Activated CD4-positive, alpha-beta T cell treated with anti-CD3 and anti-CD28 coated beads for 36 hours (primary cell): ENCODE measurements at regions of chr2 and their contacts with region 1.

Region 1: GRCh38 chr2:213151437-213152064 is at the start of gene IKZF2:
- DNase-seq: peak; percentile 82
- ATAC-seq: peak; percentile 77
- H3K4me3 Mint-ChIP-seq: peak within 1 kb of the TSS; percentile 88
- H3K27ac Mint-ChIP-seq: peak within 1 kb of the TSS; percentile 85
- H3K4me1 Mint-ChIP-seq: peaks cover 35% of the 10 kb centered on the region
- H3K27me3 Mint-ChIP-seq: peaks cover 32% of the 10 kb centered on the region
- total RNA-seq, gene IKZF2: 6.3 to 8.3 TPM

Region 2: DNA sequence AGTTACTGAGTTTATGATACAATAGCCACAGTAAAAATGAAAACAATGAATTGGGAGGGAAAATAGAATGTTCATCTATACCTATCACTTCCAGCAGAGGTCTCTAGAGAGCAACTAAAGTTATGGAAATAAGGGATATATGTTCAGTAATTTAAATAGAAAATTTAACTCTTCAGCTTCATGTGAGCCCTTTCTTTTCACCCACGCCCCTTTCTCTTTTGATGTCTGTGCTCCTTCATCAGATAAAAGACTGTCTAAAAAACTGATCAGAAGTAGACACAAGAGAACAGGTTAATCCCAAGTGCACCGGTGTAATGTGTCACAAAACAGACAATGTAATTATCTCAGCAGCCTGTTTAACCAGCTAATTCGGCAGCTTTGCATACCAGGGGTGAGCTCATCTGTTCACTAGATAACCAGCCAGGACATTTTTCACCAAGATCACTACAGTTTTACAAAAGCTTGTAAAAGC is 374.5 kb before region 1 on chr2:
- CTCF ChIA-PET with region 1: interaction called, 20 read pairs
- POLR2A ChIA-PET with region 1: no interaction called
- intact Hi-C with region 1: loop called (anchors 1 kb)
- DNase-seq: no peak
- ATAC-seq: peak; percentile 44
- H3K4me3 Mint-ChIP-seq: no peak overlapping the region
- H3K27ac Mint-ChIP-seq: no peak overlapping the region
- H3K4me1 Mint-ChIP-seq: peaks cover 4% of the 10 kb centered on the region
- H3K27me3 Mint-ChIP-seq: no peaks in the 10 kb centered on the region

Region 3: DNA sequence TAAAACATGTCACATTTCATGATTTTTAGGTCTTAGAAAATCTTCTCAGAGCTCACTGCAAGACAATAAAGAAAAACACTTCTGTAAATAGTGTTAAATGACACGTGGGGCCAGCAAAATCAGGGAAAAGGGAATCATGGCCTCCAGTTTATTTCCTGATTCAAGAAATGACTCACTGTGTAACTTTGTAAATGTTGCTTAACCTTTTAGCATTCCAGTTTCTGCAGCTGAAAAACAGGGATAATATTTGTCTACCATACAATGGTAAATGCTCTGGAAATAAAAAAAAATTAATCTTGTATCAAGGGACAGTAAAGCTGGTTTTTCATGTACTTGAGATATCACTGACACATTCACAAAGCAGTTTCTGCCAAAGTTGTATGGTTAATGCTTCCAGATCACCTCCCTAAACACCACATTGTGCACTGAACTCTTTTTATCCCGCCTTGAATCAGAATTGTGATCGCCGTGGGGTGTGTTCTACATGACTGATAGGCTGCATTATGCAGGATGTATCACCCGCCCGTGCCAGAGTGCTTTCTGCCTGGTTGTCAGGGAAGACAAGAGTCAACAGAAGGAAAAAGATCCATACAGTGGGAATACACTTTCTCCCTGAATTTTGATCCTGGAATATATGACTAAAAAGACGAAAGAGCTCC is 239.0 kb before region 1 on chr2:
- CTCF ChIA-PET with region 1: interaction called, 3 read pairs
- POLR2A ChIA-PET with region 1: no interaction called
- intact Hi-C with region 1: loop called (anchors 2 to 5 kb)
- DNase-seq: no peak
- ATAC-seq: no peak
- H3K4me3 Mint-ChIP-seq: no peak overlapping the region
- H3K27ac Mint-ChIP-seq: no peak overlapping the region
- H3K4me1 Mint-ChIP-seq: peaks cover 26% of the 10 kb centered on the region
- H3K27me3 Mint-ChIP-seq: peaks cover 12% of the 10 kb centered on the region

Region 4: DNA sequence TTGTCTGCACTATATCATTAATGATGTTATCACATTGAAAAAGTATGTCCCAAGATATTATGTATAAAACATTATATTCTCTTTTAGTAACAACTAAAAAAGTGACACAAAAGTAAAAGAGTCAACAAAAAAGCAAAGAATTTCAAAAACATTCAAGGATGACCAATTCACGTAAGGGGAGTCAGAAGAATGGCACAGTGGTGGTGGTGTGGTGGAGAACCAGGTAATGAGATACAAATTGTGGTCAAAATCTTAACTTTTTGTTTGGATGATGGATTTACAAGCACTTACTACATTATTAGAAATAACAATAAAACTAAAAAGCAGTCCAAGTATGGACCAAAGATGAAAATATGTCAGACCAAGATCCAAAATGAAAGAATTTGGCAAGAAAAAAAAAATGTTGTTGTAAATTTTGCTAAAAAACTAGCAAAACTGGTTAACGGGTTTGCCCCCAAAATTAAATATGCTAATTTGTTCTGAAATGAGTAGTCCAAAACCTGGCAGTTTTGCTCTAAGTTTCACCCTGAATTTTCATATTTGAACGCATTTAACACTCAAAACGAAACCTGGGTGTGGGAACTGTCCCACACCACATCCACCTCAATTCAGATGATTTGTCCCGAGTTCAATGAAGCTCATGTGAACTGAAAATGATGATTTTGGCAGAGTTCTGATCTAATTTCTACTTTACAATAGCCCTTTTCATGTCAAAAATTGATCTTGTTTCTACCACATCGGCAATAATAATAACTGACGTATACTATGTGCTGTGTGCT is 136.0 kb before region 1 on chr2:
- CTCF ChIA-PET with region 1: interaction called, 4 read pairs
- POLR2A ChIA-PET with region 1: no interaction called
- intact Hi-C with region 1: loop called (anchors 1 to 2 kb)
- DNase-seq: peak; percentile 78
- ATAC-seq: peak; percentile 81
- H3K4me3 Mint-ChIP-seq: no peak overlapping the region
- H3K27ac Mint-ChIP-seq: no peak overlapping the region
- H3K4me1 Mint-ChIP-seq: peaks cover 36% of the 10 kb centered on the region
- H3K27me3 Mint-ChIP-seq: peaks cover 17% of the 10 kb centered on the region

Region 5: DNA sequence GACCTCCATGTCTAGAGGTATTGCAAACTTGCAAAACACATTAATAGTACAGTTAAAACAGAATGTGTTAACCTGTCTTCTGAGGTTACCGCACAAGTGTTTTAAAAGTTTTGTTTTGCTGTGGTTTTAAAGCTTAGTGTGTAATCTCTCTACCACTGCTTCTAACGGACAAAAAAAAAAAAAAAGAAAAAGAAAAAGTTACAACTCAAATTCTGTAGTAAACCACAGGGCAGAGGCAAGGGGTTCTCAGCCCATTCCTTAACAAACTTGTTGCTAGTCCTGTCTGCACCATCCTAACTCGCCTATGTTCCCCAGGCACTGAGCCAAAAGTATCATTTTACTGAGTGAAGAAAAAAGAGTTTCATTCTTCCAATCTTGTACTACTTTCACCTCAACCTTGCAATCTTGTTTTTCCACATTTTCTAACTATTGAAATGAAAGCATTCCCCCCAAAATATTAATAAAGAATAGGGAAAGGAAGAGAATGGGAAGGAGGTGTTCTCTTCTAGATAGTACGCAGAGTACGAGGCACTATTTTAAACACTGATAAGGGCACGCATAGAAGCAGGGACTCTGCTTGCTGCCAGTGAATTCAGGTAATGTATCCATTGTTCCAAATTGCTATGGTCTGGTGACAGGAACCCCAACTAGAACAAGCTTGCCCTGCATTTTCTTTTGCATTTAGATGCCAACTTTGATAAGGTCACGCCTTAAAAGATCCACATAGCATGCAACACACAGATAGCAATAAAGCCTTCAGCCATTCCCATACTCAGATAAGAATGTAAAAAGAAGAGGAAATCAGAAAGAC is 47.3 kb before region 1 on chr2:
- CTCF ChIA-PET with region 1: interaction called, 3 read pairs
- POLR2A ChIA-PET with region 1: interaction called, 4 read pairs
- intact Hi-C with region 1: loop called in 1 of 2 experiments (anchors 5 kb)
- DNase-seq: no peak
- ATAC-seq: peak; percentile 27
- H3K4me3 Mint-ChIP-seq: peak overlapping the region; percentile 59
- H3K27ac Mint-ChIP-seq: peak overlapping the region; percentile 47
- H3K4me1 Mint-ChIP-seq: peaks cover 30% of the 10 kb centered on the region
- H3K27me3 Mint-ChIP-seq: no peaks in the 10 kb centered on the region

Region 6: DNA sequence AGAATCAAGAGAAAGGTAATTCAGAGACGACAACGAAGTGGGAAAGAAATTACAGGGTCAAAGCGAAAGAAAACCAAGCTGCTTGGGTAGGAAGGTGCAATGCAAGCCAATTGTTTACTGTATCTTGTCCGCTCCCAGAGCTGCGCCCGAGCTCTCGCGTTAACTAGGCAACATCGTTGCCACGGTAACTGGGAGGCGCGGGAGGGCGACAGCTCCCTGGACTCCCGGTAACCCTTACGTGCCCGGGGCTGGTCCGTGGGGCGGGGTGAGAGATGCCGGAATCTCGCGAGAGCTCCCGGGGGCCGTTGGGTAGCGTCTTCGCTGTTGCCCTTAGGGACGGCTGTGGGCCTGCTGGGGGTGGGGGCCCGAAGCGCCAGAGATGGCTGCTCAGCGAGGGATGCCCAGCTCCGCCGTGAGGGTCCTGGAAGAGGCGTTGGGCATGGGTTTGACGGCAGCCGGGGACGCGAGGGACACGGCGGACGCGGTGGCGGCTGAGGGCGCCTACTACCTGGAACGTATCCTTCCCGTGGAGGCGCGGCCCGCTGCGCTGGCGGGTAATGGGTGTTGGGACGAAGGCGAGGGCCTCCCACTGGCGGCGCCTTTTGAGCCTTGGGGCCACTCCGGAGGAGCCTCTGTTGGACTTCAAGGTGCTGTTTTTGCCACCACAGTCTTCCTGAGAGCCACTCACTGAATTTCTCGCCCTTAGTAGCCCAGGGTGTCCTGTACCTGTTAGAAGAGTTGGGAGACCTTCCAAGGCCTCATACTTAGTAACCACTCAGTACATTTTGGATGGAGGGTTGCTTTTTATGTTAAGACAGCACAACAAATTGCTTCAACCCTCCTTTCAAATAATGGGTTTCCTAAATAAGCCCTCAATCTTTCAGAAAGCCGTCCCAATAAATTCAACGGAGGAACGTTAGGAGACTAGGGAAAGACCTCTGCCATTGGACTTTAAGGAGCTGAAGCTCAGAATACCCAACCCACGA is 132.8 kb after region 1 on chr2 and contains the start of gene SPAG16:
- CTCF ChIA-PET with region 1: no interaction called
- POLR2A ChIA-PET with region 1: no interaction called
- intact Hi-C with region 1: loop called in 1 of 2 experiments (anchors 2 kb)
- DNase-seq: peak; percentile 99
- ATAC-seq: peak; percentile 99
- H3K4me3 Mint-ChIP-seq: peak within 1 kb of the TSS; percentile 88
- H3K27ac Mint-ChIP-seq: peak within 1 kb of the TSS; percentile 88
- H3K4me1 Mint-ChIP-seq: peaks cover 23% of the 10 kb centered on the region
- H3K27me3 Mint-ChIP-seq: no peaks in the 10 kb centered on the region
- total RNA-seq, gene SPAG16: 10.1 to 10.8 TPM